A673 (cell line): ENCODE measurements at regions of chr12 and their contacts with region 1.

Region 1: GRCh38 chr12:20646239-20646827 is 48.8 kb upstream of the SLCO1C1 start:
- DNase-seq: peak; percentile 62
- H3K4me3 ChIP-seq: no peak overlapping the region
- H3K27ac ChIP-seq: no peak overlapping the region
- H3K4me1 ChIP-seq: no peaks in the 10 kb centered on the region
- H3K27me3 ChIP-seq: peaks cover 3% of the 10 kb centered on the region
- CTCF ChIP-seq: peak; percentile 69

Region 2: DNA sequence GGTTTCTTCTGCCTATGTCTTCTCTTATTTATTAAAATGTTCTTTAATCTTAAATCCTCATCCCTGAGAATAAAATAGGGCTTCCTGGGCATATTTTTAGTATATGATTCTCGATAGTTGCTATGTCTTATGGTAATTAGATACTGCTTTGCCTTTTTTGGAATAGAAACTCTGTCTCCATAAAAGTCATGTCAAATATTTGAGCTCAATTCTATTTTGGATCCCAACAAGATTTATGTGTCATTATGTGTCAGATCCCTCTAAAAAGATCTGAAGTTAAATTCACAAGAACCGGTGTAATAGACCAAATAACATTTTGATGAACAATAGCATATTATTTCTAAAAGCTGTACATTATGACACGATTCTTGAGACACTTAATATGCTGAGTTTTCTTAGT is 590.5 kb before region 1 on chr12:
- CTCF ChIA-PET with region 1: no interaction called
- POLR2A ChIA-PET with region 1: no interaction called
- intact Hi-C with region 1: no loop called
- DNase-seq: no peak
- H3K4me3 ChIP-seq: no peak overlapping the region
- H3K27ac ChIP-seq: no peak overlapping the region
- H3K4me1 ChIP-seq: no peaks in the 10 kb centered on the region
- H3K27me3 ChIP-seq: no peaks in the 10 kb centered on the region
- CTCF ChIP-seq: no peak

Region 3: GRCh38 chr12:20798561-20798960 is 152.2 kb after region 1 on chr12:
- CTCF ChIA-PET with region 1: no interaction called
- POLR2A ChIA-PET with region 1: no interaction called
- intact Hi-C with region 1: loop called (anchors 1 kb)
- DNase-seq: peak; percentile 57
- H3K4me3 ChIP-seq: no peak overlapping the region
- H3K27ac ChIP-seq: no peak overlapping the region
- H3K4me1 ChIP-seq: no peaks in the 10 kb centered on the region
- H3K27me3 ChIP-seq: no peaks in the 10 kb centered on the region
- CTCF ChIP-seq: peak; percentile 59

Region 4: GRCh38 chr12:20950248-20950647 is 303.9 kb after region 1 on chr12:
- CTCF ChIA-PET with region 1: no interaction called
- POLR2A ChIA-PET with region 1: no interaction called
- intact Hi-C with region 1: loop called (anchors 10 kb)
- DNase-seq: peak; percentile 59
- H3K4me3 ChIP-seq: no peak overlapping the region
- H3K27ac ChIP-seq: no peak overlapping the region
- H3K4me1 ChIP-seq: no peaks in the 10 kb centered on the region
- H3K27me3 ChIP-seq: no peaks in the 10 kb centered on the region
- CTCF ChIP-seq: peak; percentile 67

Region 5: GRCh38 chr12:21169878-21170472 is 523.6 kb after region 1 on chr12:
- CTCF ChIA-PET with region 1: no interaction called
- POLR2A ChIA-PET with region 1: no interaction called
- intact Hi-C with region 1: loop called (anchors 1 kb)
- DNase-seq: peak; percentile 72
- H3K4me3 ChIP-seq: no peak overlapping the region
- H3K27ac ChIP-seq: no peak overlapping the region
- H3K4me1 ChIP-seq: no peaks in the 10 kb centered on the region
- H3K27me3 ChIP-seq: peaks cover 14% of the 10 kb centered on the region
- CTCF ChIP-seq: peak; percentile 88